ENCODE measurements at regions of chr22 and their contacts with region 1.

Region 1: GRCh38 chr22:50250555-50251476 is at the start of gene HDAC10:
- DNase-seq: peak; percentile 38 to 90 (median 77)
- ATAC-seq: peak; percentile 72
- H3K4me3 ChIP-seq: peak within 1 kb of the TSS; percentile 77 to 89
- H3K4me3 Mint-ChIP-seq: peak within 1 kb of the TSS; percentile 81
- H3K27ac ChIP-seq: peak within 1 kb of the TSS; percentile 58 to 67
- H3K27ac Mint-ChIP-seq: no peak within 1 kb of the TSS
- H3K4me1 ChIP-seq: peaks cover 36% of the 10 kb centered on the region
- H3K4me1 Mint-ChIP-seq: peaks cover 22% of the 10 kb centered on the region
- H3K27me3 ChIP-seq: no peaks in the 10 kb centered on the region
- H3K27me3 Mint-ChIP-seq: no peaks in the 10 kb centered on the region
- CTCF ChIP-seq: no peak
- total RNA-seq, gene HDAC10: 81.8 to 82.6 TPM

Region 2: GRCh38 chr22:50170453-50171318 is 80.1 kb before region 1 on chr22 and contains the start of gene PANX2:
- CTCF ChIA-PET with region 1: no interaction called
- POLR2A ChIA-PET with region 1: no interaction called
- intact Hi-C with region 1: no loop called
- DNase-seq: no peak
- ATAC-seq: peak; percentile 35
- H3K4me3 ChIP-seq: no peak within 1 kb of the TSS
- H3K4me3 Mint-ChIP-seq: peak within 1 kb of the TSS; percentile 73
- H3K27ac ChIP-seq: no peak within 1 kb of the TSS
- H3K27ac Mint-ChIP-seq: no peak within 1 kb of the TSS
- H3K4me1 ChIP-seq: no peaks in the 10 kb centered on the region
- H3K4me1 Mint-ChIP-seq: peaks cover 4% of the 10 kb centered on the region
- H3K27me3 ChIP-seq: peaks cover 9 to 23% of the 10 kb centered on the region in 2 experiments
- H3K27me3 Mint-ChIP-seq: peaks cover 29% of the 10 kb centered on the region
- CTCF ChIP-seq: no peak
- total RNA-seq, gene PANX2: 0.16 TPM in 1 of 2 experiments, not detected in the other

Region 3: GRCh38 chr22:50238755-50239154 is 12.1 kb before region 1 on chr22:
- CTCF ChIA-PET with region 1: interaction called, 14 read pairs
- POLR2A ChIA-PET with region 1: interaction called, 6 read pairs
- intact Hi-C with region 1: no loop called
- DNase-seq: no peak
- ATAC-seq: no peak
- H3K4me3 ChIP-seq: no peak overlapping the region
- H3K4me3 Mint-ChIP-seq: no peak overlapping the region
- H3K27ac ChIP-seq: no peak overlapping the region
- H3K27ac Mint-ChIP-seq: no peak overlapping the region
- H3K4me1 ChIP-seq: peaks cover 29% of the 10 kb centered on the region
- H3K4me1 Mint-ChIP-seq: peaks cover 46% of the 10 kb centered on the region
- H3K27me3 ChIP-seq: no peaks in the 10 kb centered on the region
- H3K27me3 Mint-ChIP-seq: no peaks in the 10 kb centered on the region
- CTCF ChIP-seq: no peak

Region 4: DNA sequence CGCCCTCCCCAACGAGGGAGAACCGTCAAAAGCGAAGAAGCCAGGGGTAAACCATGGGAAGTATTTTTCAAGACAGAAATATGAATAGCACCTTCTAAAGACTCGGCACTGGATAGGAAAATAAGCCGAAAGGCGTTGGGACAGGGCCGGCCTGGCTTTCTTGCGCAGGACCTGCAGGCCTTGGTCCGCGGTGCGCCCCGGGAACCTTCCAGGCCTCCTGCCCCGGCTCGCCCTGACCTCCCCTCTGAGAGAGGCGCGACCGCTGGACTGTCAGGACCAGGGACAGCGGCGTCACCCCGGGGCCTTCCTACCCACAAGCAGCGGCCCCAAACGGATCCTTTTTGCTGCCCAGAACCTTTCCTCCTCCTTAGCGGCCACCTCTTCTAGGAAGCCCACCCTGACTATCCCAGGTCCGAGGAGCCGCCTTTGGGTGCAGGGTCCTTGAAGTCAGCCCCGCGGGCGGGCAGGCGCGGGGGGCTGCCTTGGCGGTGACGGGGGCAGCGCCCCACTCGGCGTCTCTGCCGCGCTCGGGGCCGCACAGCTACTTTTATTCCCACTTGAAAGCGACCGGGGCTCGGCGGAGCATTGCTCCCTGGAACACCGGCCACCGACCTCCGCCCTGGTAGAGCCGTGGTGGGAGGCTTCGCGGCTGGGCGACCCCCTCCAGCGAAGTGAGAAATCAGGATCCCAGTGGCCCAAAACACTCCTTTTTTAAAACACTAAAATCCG is 20.0 kb after region 1 on chr22:
- CTCF ChIA-PET with region 1: interaction called, 11 read pairs
- POLR2A ChIA-PET with region 1: no interaction called
- intact Hi-C with region 1: loop called (anchors 1 kb)
- DNase-seq: peak; percentile 49 to 82 (median 72)
- ATAC-seq: peak; percentile 64
- H3K4me3 ChIP-seq: peak overlapping the region; percentile 45 to 65
- H3K4me3 Mint-ChIP-seq: peak overlapping the region; percentile 69
- H3K27ac ChIP-seq: no peak overlapping the region
- H3K27ac Mint-ChIP-seq: no peak overlapping the region
- H3K4me1 ChIP-seq: peaks cover 25% of the 10 kb centered on the region
- H3K4me1 Mint-ChIP-seq: peaks cover 18% of the 10 kb centered on the region
- H3K27me3 ChIP-seq: peaks cover 0 to 2% of the 10 kb centered on the region in 2 experiments
- H3K27me3 Mint-ChIP-seq: peaks cover 3% of the 10 kb centered on the region
- CTCF ChIP-seq: no peak

Region 5: GRCh38 chr22:50326959-50327710 is 76.3 kb after region 1 on chr22 and contains the start of gene DENND6B:
- CTCF ChIA-PET with region 1: interaction called, 61 read pairs
- POLR2A ChIA-PET with region 1: interaction called, 7 read pairs
- intact Hi-C with region 1: loop called (anchors 1 kb)
- DNase-seq: peak; percentile 34 to 85 (median 64)
- ATAC-seq: peak; percentile 94
- H3K4me3 ChIP-seq: peak within 1 kb of the TSS; percentile 45 to 69
- H3K4me3 Mint-ChIP-seq: peak within 1 kb of the TSS; percentile 83
- H3K27ac ChIP-seq: peak within 1 kb of the TSS; percentile 23 to 37
- H3K27ac Mint-ChIP-seq: peak within 1 kb of the TSS; percentile 84
- H3K4me1 ChIP-seq: peaks cover 10% of the 10 kb centered on the region
- H3K4me1 Mint-ChIP-seq: peaks cover 12% of the 10 kb centered on the region
- H3K27me3 ChIP-seq: no peaks in the 10 kb centered on the region
- H3K27me3 Mint-ChIP-seq: peaks cover 2% of the 10 kb centered on the region
- CTCF ChIP-seq: peak; percentile 65
- total RNA-seq, gene DENND6B: 3.0 to 3.1 TPM

Region 6: DNA sequence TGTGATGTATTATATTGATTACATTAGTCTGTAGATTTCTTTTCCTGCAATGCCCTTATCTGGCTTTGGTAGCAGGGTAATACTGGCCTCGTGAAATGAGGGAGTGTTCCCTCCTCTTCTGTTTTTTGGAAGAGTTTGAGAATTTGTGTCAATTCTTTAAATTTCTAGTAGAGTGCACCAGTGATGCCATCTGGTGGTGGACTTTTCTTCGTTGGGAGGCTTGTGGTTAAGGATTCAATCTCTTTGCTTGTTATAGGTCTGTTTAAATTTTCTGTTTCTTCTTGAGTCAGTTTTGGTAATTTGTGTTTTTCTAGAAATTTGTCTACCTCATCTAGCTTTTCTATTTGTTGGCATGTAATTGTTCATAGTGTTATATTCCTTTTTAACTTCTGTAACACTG is 440.7 kb after region 1 on chr22:
- CTCF ChIA-PET with region 1: no interaction called
- POLR2A ChIA-PET with region 1: no interaction called
- intact Hi-C with region 1: loop called in 1 of 2 experiments (anchors 5 kb)
- DNase-seq: peak in 4 of 9 experiments; percentile 27 to 63 (median 42)
- ATAC-seq: no peak
- H3K4me3 ChIP-seq: no peak overlapping the region
- H3K4me3 Mint-ChIP-seq: no peak overlapping the region
- H3K27ac ChIP-seq: no peak overlapping the region
- H3K27ac Mint-ChIP-seq: no peak overlapping the region
- H3K4me1 ChIP-seq: no peaks in the 10 kb centered on the region
- H3K4me1 Mint-ChIP-seq: no peaks in the 10 kb centered on the region
- H3K27me3 ChIP-seq: peaks cover 0 to 2% of the 10 kb centered on the region in 2 experiments
- H3K27me3 Mint-ChIP-seq: peaks cover 4% of the 10 kb centered on the region
- CTCF ChIP-seq: peak; percentile 42

Measured in CD8-positive, alpha-beta T cell (primary cell).